GM13976 (cell line): ENCODE measurements at regions of chr1 and their contacts with region 1.

Region 1: DNA sequence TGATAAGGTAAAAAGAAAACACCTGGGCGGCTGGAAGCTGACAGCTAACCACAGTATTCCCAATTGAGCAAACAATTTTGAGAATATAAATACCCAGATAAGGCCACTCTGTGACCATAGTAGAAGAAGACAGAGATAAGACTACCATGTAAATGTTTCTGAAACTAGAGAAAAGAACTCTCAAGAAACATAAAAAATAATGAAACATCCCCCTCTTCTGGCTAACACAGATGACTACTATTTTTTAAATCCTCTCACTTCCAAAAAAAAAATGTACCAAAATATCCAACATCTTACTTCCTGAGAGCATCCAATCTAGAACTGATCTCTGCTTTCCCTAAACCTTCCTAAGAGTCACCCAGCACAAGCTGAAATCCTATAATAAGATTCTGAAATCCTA is 125.9 kb downstream of the HFM1 start:
- DNase-seq: no peak
- CTCF ChIP-seq: no peak

Region 2: GRCh38 chr1:91161749-91162148 is 117.0 kb before region 1 on chr1:
- in situ Hi-C with region 1: no loop called
- DNase-seq: no peak
- CTCF ChIP-seq: no peak

Region 3: GRCh38 chr1:91937613-91938012 is 658.9 kb after region 1 on chr1:
- in situ Hi-C with region 1: loop called (anchors 10 kb)
- DNase-seq: no peak
- CTCF ChIP-seq: no peak